BJ (cell line): ENCODE measurements at regions of chr6 and their contacts with region 1.

Region 1: DNA sequence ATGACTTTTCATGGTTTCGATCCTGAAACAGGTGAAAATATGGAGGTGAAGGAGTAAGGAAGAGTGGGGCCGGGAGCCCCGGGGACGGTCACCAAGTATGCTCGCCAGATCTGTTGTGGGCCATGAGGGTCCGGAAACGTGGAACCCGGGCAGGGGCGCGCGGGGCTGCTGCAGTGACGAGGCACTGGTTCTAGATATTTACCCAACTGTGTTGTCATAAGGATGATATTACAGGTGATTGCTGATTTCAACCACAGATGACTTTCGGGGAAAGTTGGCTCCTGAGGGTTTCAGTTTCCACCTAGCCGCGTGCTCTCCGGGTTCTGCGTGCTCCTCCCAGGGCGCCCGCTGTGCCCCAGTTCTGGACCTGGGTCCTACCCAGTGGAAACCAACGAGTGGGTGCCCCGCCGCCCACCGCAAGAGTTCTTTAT is 12.2 kb downstream of the RAET1G start:
- DNase-seq: no peak
- H3K4me3 ChIP-seq: no peak overlapping the region
- H3K27me3 ChIP-seq: peaks cover 7% of the 10 kb centered on the region
- CTCF ChIP-seq: no peak

Region 2: GRCh38 chr6:149815788-149816187 is 94.9 kb before region 1 on chr6:
- CTCF ChIA-PET with region 1: no interaction called
- POLR2A ChIA-PET with region 1: no interaction called
- DNase-seq: no peak
- H3K4me3 ChIP-seq: no peak overlapping the region
- H3K27me3 ChIP-seq: no peaks in the 10 kb centered on the region
- CTCF ChIP-seq: no peak

Region 3: GRCh38 chr6:149974825-149975224 is 64.1 kb after region 1 on chr6:
- CTCF ChIA-PET with region 1: no interaction called
- POLR2A ChIA-PET with region 1: interaction called, 16 read pairs
- DNase-seq: no peak
- H3K4me3 ChIP-seq: no peak overlapping the region
- H3K27me3 ChIP-seq: peaks cover 29% of the 10 kb centered on the region
- CTCF ChIP-seq: no peak